Aorta (tissue), 5 donors: ENCODE measurements at regions of chr2 and their contacts with region 1.

Region 1: GRCh38 chr2:225668606-225669266 is 269.2 kb downstream of the NYAP2 start:
- DNase-seq: no peak
- ATAC-seq: no peak
- H3K4me3 ChIP-seq: no peak overlapping the region
- H3K27ac ChIP-seq: no peak overlapping the region
- H3K4me1 ChIP-seq: no peaks in the 10 kb centered on the region
- H3K27me3 ChIP-seq: no peaks in the 10 kb centered on the region

Region 2: DNA sequence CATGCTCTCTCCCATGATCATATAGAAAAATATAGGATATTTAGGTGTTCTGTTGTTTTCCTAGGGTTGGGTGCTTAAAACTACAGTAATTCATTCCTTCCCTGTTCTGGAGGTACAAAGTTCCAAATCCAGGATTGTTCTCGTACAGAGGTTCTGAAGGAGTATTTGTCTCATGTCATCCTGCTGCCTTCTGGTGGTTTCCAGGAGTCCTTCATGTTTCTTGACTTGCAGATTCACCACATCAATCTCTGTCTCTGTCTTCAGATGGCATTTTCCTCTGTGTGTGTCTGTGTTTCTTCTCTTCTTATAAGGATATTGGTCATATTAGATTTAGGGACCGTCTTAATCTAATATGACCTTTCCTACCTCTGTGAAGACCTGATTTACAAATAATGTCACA is 128.7 kb after region 1 on chr2:
- intact Hi-C with region 1: loop called (anchors 5 kb)
- DNase-seq: no peak
- ATAC-seq: no peak
- H3K4me3 ChIP-seq: no peak overlapping the region
- H3K27ac ChIP-seq: no peak overlapping the region
- H3K4me1 ChIP-seq: no peaks in the 10 kb centered on the region
- H3K27me3 ChIP-seq: no peaks in the 10 kb centered on the region

Region 3: DNA sequence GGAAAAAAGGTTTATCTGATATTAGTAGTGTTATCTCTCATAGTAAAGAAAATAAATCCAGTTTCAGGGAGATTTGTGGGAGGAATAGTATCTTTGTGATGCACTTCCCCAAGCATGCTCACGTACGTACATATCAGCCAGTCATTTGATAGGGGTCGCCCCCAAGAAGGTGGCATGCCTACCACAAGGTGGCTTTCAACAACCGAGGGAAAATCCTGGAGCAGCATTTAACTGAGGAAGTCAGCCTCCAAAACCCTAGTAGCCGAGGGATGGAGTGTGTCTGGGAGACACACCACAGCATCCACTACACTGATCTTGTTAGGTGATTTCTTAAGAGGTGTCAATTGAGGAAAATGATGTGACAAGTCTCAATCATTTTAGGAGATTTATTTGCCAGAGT is 354.6 kb after region 1 on chr2:
- intact Hi-C with region 1: loop called in 1 of 2 experiments (anchors 10 kb)
- DNase-seq: no peak
- ATAC-seq: no peak
- H3K4me3 ChIP-seq: no peak overlapping the region
- H3K27ac ChIP-seq: no peak overlapping the region
- H3K4me1 ChIP-seq: no peaks in the 10 kb centered on the region
- H3K27me3 ChIP-seq: no peaks in the 10 kb centered on the region

Region 4: GRCh38 chr2:226984750-226985582 is 1316.2 kb after region 1 on chr2:
- intact Hi-C with region 1: loop called (anchors 2 to 5 kb)
- DNase-seq: no peak
- ATAC-seq: peak; percentile 86
- H3K4me3 ChIP-seq: no peak overlapping the region
- H3K27ac ChIP-seq: peak overlapping the region in 1 of 2 donors; percentile 6
- H3K4me1 ChIP-seq: peaks cover 0 to 2% of the 10 kb centered on the region in 2 donors
- H3K27me3 ChIP-seq: no peaks in the 10 kb centered on the region